Calu3 (cell line): ENCODE measurements at regions of chrX and their contacts with region 1.

Region 1: DNA sequence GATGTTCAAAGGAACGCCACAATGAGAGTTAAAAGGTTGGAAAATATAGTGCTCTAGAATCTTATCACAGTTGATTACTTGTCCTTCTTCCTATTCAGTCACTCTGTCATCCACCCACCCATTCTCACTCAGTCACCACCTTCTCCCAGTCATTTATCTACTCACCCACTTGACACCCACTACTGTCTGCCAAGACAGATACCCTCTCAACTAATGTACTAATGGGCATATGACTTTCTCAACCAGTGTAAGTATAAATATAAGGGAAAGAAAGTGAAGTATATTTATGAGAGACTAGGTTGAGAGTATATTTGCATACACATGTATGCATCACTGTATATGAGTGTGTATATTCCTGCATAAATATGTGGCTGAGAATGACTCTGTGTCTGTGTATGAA is 20.0 kb downstream of the MID2 start:
- DNase-seq: no peak
- H3K4me3 Mint-ChIP-seq: no peak overlapping the region
- H3K27ac Mint-ChIP-seq: no peak overlapping the region
- H3K4me1 Mint-ChIP-seq: peaks cover 8% of the 10 kb centered on the region
- H3K27me3 Mint-ChIP-seq: no peaks in the 10 kb centered on the region
- CTCF ChIP-seq: no peak

Region 2: GRCh38 chrX:107710617-107711391 is 134.8 kb before region 1 on chrX:
- CTCF ChIA-PET with region 1: no interaction called
- intact Hi-C with region 1: no loop called
- DNase-seq: peak; percentile 63
- H3K4me3 Mint-ChIP-seq: peak overlapping the region; percentile 65
- H3K27ac Mint-ChIP-seq: peak overlapping the region; percentile 100
- H3K4me1 Mint-ChIP-seq: peaks cover 38% of the 10 kb centered on the region
- H3K27me3 Mint-ChIP-seq: no peaks in the 10 kb centered on the region
- CTCF ChIP-seq: no peak

Region 3: GRCh38 chrX:107787827-107788226 is 57.8 kb before region 1 on chrX:
- CTCF ChIA-PET with region 1: no interaction called
- intact Hi-C with region 1: loop called (anchors 2 kb)
- DNase-seq: no peak
- H3K4me3 Mint-ChIP-seq: no peak overlapping the region
- H3K27ac Mint-ChIP-seq: no peak overlapping the region
- H3K4me1 Mint-ChIP-seq: no peaks in the 10 kb centered on the region
- H3K27me3 Mint-ChIP-seq: no peaks in the 10 kb centered on the region
- CTCF ChIP-seq: no peak